ENCODE measurements at regions of chr15 and their contacts with region 1.

Region 1: GRCh38 chr15:81336568-81336967 is 12.6 kb upstream of the STARD5 start:
- DNase-seq: peak; percentile 21 to 36
- ATAC-seq: peak; percentile 35 to 76; a peak in 3 of 6 replicates
- H3K4me3 ChIP-seq: no peak overlapping the region
- H3K27ac ChIP-seq: no peak overlapping the region
- H3K4me1 ChIP-seq: peaks cover 13% of the 10 kb centered on the region; the same call in 2 of the 3 replicates
- CTCF ChIP-seq: peak; percentile 33; the same call in 1 of the 3 replicates
- EP300 ChIP-seq: no peak
- POLR2A ChIP-seq: no peak
- RAD21 ChIP-seq: peak; percentile 32 to 66; a peak in 2 of 5 replicates

Region 2: DNA sequence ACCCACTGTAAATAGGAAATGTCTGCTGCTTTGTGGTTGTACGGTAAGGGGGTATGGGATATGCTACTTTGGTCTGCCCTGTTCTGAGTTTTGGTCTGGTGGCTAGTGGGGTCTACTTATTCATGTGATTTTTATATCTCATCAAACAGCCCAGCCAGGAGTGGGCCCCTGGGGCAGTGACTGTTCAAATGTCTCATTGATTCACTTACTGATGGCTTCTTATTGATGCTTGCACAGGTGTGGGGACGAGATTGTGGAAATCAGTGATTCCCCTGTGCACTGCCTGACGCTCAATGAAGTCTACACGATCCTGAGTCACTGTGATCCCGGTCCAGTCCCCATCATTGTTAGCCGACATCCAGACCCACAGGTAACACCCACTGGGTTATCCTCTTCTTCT is 51.1 kb before region 1 on chr15:
- CTCF ChIA-PET with region 1: no interaction called
- POLR2A ChIA-PET with region 1: no interaction called
- DNase-seq: no peak
- ATAC-seq: no peak
- H3K4me3 ChIP-seq: no peak overlapping the region
- H3K27ac ChIP-seq: no peak overlapping the region
- H3K4me1 ChIP-seq: no peaks in the 10 kb centered on the region
- CTCF ChIP-seq: no peak
- EP300 ChIP-seq: no peak
- POLR2A ChIP-seq: no peak
- RAD21 ChIP-seq: no peak

Region 3: DNA sequence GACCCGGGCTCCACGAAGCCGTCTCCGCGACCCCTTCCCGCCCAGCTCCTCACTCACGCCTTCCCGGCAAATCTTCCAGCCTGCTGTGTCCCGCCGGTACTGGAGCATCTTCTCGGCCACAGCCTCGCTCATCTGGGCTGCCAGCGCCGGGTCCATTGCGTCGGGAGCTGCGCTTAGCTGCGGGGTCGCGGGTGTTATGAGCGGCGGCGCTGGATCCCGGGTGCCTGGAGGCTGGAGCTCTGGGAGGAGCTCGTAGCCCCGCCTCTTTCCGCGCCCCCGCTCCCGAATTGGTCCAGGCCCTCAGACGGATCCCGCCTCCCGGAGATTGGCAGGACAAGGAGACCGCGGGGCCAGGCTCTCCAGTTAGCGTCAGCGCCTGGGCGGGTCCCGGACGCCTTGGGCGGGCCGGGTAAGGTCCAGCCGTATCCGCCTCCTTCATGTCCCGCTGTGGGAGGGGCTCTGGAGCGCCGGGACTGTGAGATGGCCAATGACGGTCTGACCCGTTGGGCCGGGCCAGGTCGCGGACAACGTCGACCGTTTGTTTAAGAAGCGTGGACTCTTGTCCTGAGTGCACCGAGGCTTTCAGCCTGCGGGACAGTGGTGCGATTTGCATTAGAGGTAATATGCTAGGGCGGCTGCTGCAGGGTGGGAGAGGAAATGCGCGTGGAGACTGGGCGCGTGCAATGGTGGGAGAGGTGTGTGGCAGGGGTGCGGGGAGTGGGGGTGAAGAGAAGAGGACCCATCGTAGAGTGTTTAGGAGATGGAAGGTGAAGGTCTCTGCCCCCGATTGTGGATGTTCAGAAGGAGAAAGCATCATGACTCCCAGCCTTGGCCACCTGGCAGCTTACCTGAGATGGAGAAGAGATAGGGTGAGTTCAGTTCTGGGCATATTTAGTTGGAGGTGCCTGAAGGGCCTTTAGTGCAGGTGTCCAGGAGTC is 12.4 kb before region 1 on chr15 and contains the start of gene STARD5:
- CTCF ChIA-PET with region 1: interaction called, 10 read pairs
- POLR2A ChIA-PET with region 1: interaction called, 4 read pairs
- DNase-seq: peak; percentile 95 to 99
- ATAC-seq: peak; percentile 98 to 100
- H3K4me3 ChIP-seq: peak within 1 kb of the TSS; percentile 61
- H3K27ac ChIP-seq: peak within 1 kb of the TSS; percentile 60 to 81; a peak in 5 of 6 replicates
- H3K4me1 ChIP-seq: peaks cover 8% of the 10 kb centered on the region; the same call in 1 of the 3 replicates
- CTCF ChIP-seq: no peak
- EP300 ChIP-seq: no peak
- POLR2A ChIP-seq: peak; percentile 74
- RAD21 ChIP-seq: no peak
- polyA plus RNA-seq, gene STARD5: 2.8 TPM in 2 replicates

Measured in A549 (cell line).